Prostate gland (tissue), 2 donors: ENCODE measurements at regions of chr1 and their contacts with region 1.

Region 1: GRCh38 chr1:246971090-246971721 is 36.7 kb downstream of the ZNF695 start:
- DNase-seq: peak; percentile 25
- H3K4me3 ChIP-seq: no peak overlapping the region
- H3K27ac ChIP-seq: no peak overlapping the region
- H3K4me1 ChIP-seq: no peaks in the 10 kb centered on the region
- H3K27me3 ChIP-seq: no peaks in the 10 kb centered on the region
- CTCF ChIP-seq: peak; percentile 41 to 67 (median 60)
- POLR2A ChIP-seq: no peak

Region 2: GRCh38 chr1:246907472-246907871 is 63.7 kb before region 1 on chr1:
- intact Hi-C with region 1: loop called (anchors 2 kb)
- DNase-seq: peak; percentile 14
- H3K4me3 ChIP-seq: no peak overlapping the region
- H3K27ac ChIP-seq: no peak overlapping the region
- H3K4me1 ChIP-seq: no peaks in the 10 kb centered on the region
- H3K27me3 ChIP-seq: no peaks in the 10 kb centered on the region
- CTCF ChIP-seq: peak in 3 of 4 experiments; percentile 13 to 42 (median 39)
- POLR2A ChIP-seq: no peak

Region 3: GRCh38 chr1:247046862-247047659 is 75.9 kb after region 1 on chr1:
- intact Hi-C with region 1: no loop called
- DNase-seq: no peak
- H3K4me3 ChIP-seq: no peak overlapping the region
- H3K27ac ChIP-seq: no peak overlapping the region
- H3K4me1 ChIP-seq: no peaks in the 10 kb centered on the region
- H3K27me3 ChIP-seq: no peaks in the 10 kb centered on the region
- CTCF ChIP-seq: no peak
- POLR2A ChIP-seq: no peak